GM13976 (cell line): ENCODE measurements at regions of chr2 and their contacts with region 1.

Region 1: GRCh38 chr2:102235491-102235890 is 48.7 kb downstream of the IL1RL2 start:
- DNase-seq: no peak
- CTCF ChIP-seq: peak; percentile 8

Region 2: GRCh38 chr2:102020596-102021181 is 214.8 kb before region 1 on chr2:
- in situ Hi-C with region 1: loop called (anchors 5 kb)
- DNase-seq: peak; percentile 75
- CTCF ChIP-seq: peak; percentile 97